Activated CD4-positive, alpha-beta T cell treated with anti-CD3 and anti-CD28 coated beads, Interleukin-2, amount 10 ng/mL, durations not matched to agents 24 days and 14 days (primary cell): ENCODE measurements at regions of chr13 and their contacts with region 1.

Region 1: GRCh38 chr13:43804461-43805070 is 17.8 kb upstream of the ENOX1 start:
- DNase-seq: peak; percentile 75
- H3K4me3 Mint-ChIP-seq: no peak overlapping the region
- H3K27ac Mint-ChIP-seq: no peak overlapping the region
- H3K4me1 Mint-ChIP-seq: peaks cover 6% of the 10 kb centered on the region
- H3K27me3 Mint-ChIP-seq: peaks cover 14% of the 10 kb centered on the region

Region 2: GRCh38 chr13:42594970-42595571 is 1209.5 kb before region 1 on chr13:
- intact Hi-C with region 1: loop called (anchors 5 kb)
- DNase-seq: peak; percentile 85
- H3K4me3 Mint-ChIP-seq: no peak overlapping the region
- H3K27ac Mint-ChIP-seq: no peak overlapping the region
- H3K4me1 Mint-ChIP-seq: no peaks in the 10 kb centered on the region
- H3K27me3 Mint-ChIP-seq: peaks cover 6% of the 10 kb centered on the region

Region 3: DNA sequence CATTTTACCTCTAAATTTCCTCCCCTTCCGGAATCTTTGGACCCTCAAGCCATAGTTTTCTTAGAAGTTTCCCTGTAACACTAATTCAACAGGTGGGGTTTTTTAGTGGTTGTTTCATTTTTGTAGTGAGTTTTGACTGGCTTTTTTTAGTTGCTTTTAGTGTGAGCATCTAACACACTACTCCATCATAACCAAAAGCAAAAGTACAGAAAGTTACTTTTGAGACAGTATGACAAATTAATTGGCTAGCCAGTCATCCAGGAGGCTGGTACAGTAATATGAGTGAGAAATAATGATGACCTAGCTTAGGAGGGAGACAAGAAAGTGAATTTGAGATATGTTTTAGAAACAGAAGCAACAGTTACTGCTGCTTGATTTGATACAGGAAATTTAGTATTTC is 709.7 kb before region 1 on chr13:
- intact Hi-C with region 1: loop called (anchors 10 kb)
- DNase-seq: no peak
- H3K4me3 Mint-ChIP-seq: no peak overlapping the region
- H3K27ac Mint-ChIP-seq: peak overlapping the region; percentile 14
- H3K4me1 Mint-ChIP-seq: peaks cover 12% of the 10 kb centered on the region
- H3K27me3 Mint-ChIP-seq: no peaks in the 10 kb centered on the region

Region 4: GRCh38 chr13:43348397-43348796 is 456.2 kb before region 1 on chr13:
- intact Hi-C with region 1: no loop called
- DNase-seq: no peak
- H3K4me3 Mint-ChIP-seq: no peak overlapping the region
- H3K27ac Mint-ChIP-seq: no peak overlapping the region
- H3K4me1 Mint-ChIP-seq: no peaks in the 10 kb centered on the region
- H3K27me3 Mint-ChIP-seq: peaks cover 25% of the 10 kb centered on the region

Region 5: GRCh38 chr13:43786773-43787517 is 17.6 kb before region 1 on chr13 and contains the start of gene ENOX1:
- intact Hi-C with region 1: no loop called
- DNase-seq: peak; percentile 72
- H3K4me3 Mint-ChIP-seq: peak within 1 kb of the TSS; percentile 83
- H3K27ac Mint-ChIP-seq: peak within 1 kb of the TSS; percentile 34
- H3K4me1 Mint-ChIP-seq: peaks cover 4% of the 10 kb centered on the region
- H3K27me3 Mint-ChIP-seq: peaks cover 44% of the 10 kb centered on the region
- total RNA-seq, gene ENOX1: 0.07 and 0.14 TPM in 2 replicates

Region 6: DNA sequence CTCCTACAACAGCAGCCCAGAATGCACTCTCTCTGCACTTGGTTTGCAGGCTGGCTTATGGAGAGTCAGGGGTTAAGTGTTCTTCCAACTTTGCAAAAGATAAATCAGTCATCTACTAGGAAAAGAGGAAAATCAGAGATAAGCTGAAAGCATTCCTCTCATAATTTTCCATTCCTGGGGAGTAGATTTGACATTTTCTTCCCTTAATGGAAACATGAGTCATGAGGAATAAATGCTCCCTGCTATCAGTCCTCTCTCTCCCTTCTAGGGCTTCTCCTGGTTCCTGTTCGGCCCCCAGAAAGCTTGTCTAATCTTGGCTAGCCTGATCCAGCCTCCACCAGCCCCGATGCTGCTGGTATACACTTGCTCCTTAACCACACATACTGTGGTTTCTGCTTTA is 10.6 kb after region 1 on chr13:
- intact Hi-C with region 1: no loop called
- DNase-seq: no peak
- H3K4me3 Mint-ChIP-seq: no peak overlapping the region
- H3K27ac Mint-ChIP-seq: no peak overlapping the region
- H3K4me1 Mint-ChIP-seq: no peaks in the 10 kb centered on the region
- H3K27me3 Mint-ChIP-seq: peaks cover 18% of the 10 kb centered on the region